SK-N-SH (cell line): ENCODE measurements at regions of chr16 and their contacts with region 1.

Region 1: DNA sequence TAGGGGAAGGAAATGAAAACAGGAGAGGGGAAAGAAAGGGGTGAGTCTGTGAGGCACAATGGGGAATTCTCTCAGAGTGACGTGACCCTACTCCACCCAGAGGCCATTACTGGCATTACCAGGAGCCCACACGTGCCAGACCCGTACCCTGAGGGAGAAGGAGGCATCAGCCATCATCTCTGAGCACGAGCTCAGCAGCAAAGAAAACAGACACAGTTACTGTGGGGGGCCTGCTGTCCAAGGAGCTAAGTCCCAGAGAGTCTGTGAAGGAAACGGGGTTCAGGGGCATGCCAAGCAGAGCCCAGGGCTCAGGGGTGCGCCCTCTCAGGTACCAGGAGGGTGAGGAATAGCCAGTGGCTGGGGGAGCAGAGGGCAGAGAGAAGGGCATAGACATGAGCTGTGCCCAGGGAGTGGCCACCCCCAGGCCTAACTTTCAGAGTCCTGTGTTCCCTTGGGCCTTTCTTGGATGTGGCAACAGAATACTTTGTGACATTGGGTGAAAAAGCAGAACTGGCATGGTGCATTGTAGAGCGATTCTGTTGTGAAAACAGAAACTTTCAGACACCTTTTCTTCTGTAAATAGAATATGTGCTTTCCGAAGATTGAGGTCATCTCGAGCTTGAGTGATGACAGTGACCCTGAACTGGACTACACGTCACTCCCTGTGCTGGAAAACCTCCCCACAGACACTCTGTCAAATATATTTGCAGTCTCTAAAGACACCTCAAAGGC is 11.3 kb downstream of the TAF1C start:
- DNase-seq: peak; percentile 91
- H3K4me3 ChIP-seq: no peak overlapping the region
- H3K27ac ChIP-seq: no peak overlapping the region
- H3K4me1 ChIP-seq: peaks cover 0 to 7% of the 10 kb centered on the region in 2 experiments; a peak in 1 of 4 replicates
- H3K27me3 ChIP-seq: no peaks in the 10 kb centered on the region
- CTCF ChIP-seq: peak; percentile 78
- EP300 ChIP-seq: no peak
- RAD21 ChIP-seq: peak; percentile 91

Region 2: GRCh38 chr16:83939266-83939855 is 236.2 kb before region 1 on chr16:
- CTCF ChIA-PET with region 1: no interaction called
- POLR2A ChIA-PET with region 1: no interaction called
- DNase-seq: no peak
- H3K4me3 ChIP-seq: no peak overlapping the region
- H3K27ac ChIP-seq: no peak overlapping the region
- H3K4me1 ChIP-seq: peaks cover 0 to 2% of the 10 kb centered on the region in 2 experiments; a peak in 1 of 4 replicates
- H3K27me3 ChIP-seq: no peaks in the 10 kb centered on the region
- CTCF ChIP-seq: no peak
- EP300 ChIP-seq: no peak
- RAD21 ChIP-seq: no peak

Region 3: DNA sequence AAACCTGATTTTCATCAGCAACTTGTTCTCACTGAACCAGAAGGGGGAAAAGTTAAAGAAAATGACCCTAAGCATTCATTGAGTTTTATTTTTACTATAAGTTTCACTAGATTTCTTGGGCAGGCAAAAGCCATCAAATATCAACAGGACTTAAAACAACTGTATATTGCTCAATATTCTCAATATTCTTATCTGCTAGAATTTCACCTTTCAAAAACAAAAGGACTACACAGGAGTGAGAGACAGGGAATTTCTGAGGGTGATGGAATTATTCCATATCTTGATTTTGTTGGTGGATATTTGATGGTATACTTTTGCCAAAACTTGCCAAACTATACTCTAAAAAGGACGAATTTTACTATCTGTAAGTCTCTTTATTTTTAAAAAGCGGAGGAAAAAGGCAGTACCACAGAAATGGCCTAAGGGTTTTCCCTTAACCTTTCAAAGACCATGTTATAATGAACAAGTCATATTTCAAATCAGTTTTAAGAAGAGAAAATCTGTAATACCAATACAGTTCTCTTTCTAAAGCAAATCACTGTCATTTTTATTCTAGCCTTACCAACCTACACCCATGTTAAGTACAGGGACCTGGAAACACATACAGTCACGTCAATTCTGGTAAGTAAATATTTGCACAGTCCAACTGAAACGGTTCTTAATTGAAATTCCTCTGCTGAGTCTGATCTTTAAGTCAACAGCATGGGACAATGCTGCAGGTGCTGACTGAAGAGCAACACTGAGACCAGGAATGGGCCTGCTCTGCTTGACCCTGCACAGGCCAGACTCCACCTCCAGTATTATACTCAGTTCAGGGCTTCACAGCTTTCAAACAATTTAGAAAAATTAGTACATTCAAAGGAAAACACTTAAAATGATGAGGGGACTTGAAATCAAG is 79.2 kb before region 1 on chr16:
- CTCF ChIA-PET with region 1: interaction called, 10 read pairs
- POLR2A ChIA-PET with region 1: no interaction called
- DNase-seq: no peak
- H3K4me3 ChIP-seq: no peak overlapping the region
- H3K27ac ChIP-seq: no peak overlapping the region
- H3K4me1 ChIP-seq: peaks cover 0 to 7% of the 10 kb centered on the region in 2 experiments; a peak in 1 of 4 replicates
- H3K27me3 ChIP-seq: no peaks in the 10 kb centered on the region
- CTCF ChIP-seq: no peak
- EP300 ChIP-seq: no peak
- RAD21 ChIP-seq: no peak

Region 4: GRCh38 chr16:84116720-84117493 is 58.6 kb before region 1 on chr16 and contains the start of gene MBTPS1:
- CTCF ChIA-PET with region 1: interaction called, 18 read pairs
- POLR2A ChIA-PET with region 1: no interaction called
- DNase-seq: peak; percentile 99
- H3K4me3 ChIP-seq: peak within 1 kb of the TSS; percentile 88 to 93
- H3K27ac ChIP-seq: peak within 1 kb of the TSS; percentile 59 to 73; a peak in 3 of 4 replicates
- H3K4me1 ChIP-seq: peaks cover 7 to 11% of the 10 kb centered on the region in 2 experiments; a peak in 3 of 4 replicates
- H3K27me3 ChIP-seq: no peaks in the 10 kb centered on the region
- CTCF ChIP-seq: no peak; the same call in 1 of the 2 replicates
- EP300 ChIP-seq: no peak; a peak in 1 of 4 replicates
- RAD21 ChIP-seq: no peak
- polyA plus RNA-seq, gene MBTPS1: 81.6 and 84.9 TPM in 2 replicates

Region 5: GRCh38 chr16:84124257-84125073 is 51.1 kb before region 1 on chr16:
- CTCF ChIA-PET with region 1: interaction called, 12 read pairs
- POLR2A ChIA-PET with region 1: no interaction called
- DNase-seq: no peak
- H3K4me3 ChIP-seq: no peak overlapping the region
- H3K27ac ChIP-seq: no peak overlapping the region
- H3K4me1 ChIP-seq: no peaks in the 10 kb centered on the region
- H3K27me3 ChIP-seq: no peaks in the 10 kb centered on the region
- CTCF ChIP-seq: no peak
- EP300 ChIP-seq: no peak
- RAD21 ChIP-seq: no peak

Region 6: GRCh38 chr16:84138824-84139627 is 36.5 kb before region 1 on chr16:
- CTCF ChIA-PET with region 1: interaction called, 14 read pairs
- POLR2A ChIA-PET with region 1: no interaction called
- DNase-seq: no peak
- H3K4me3 ChIP-seq: no peak overlapping the region
- H3K27ac ChIP-seq: no peak overlapping the region
- H3K4me1 ChIP-seq: peaks cover 0 to 2% of the 10 kb centered on the region in 2 experiments; a peak in 1 of 4 replicates
- H3K27me3 ChIP-seq: no peaks in the 10 kb centered on the region
- CTCF ChIP-seq: no peak
- EP300 ChIP-seq: no peak
- RAD21 ChIP-seq: no peak

Region 7: GRCh38 chr16:84186685-84187437 is 11.3 kb after region 1 on chr16 and contains the start of gene TAF1C:
- CTCF ChIA-PET with region 1: interaction called, 62 read pairs
- POLR2A ChIA-PET with region 1: interaction called, 4 read pairs
- DNase-seq: peak; percentile 99
- H3K4me3 ChIP-seq: peak within 1 kb of the TSS; percentile 96 to 100
- H3K27ac ChIP-seq: peak within 1 kb of the TSS; percentile 51 to 64; a peak in 3 of 4 replicates
- H3K4me1 ChIP-seq: peaks cover 0 to 11% of the 10 kb centered on the region in 2 experiments; a peak in 1 of 4 replicates
- H3K27me3 ChIP-seq: no peaks in the 10 kb centered on the region
- CTCF ChIP-seq: peak; percentile 91
- EP300 ChIP-seq: no peak; a peak in 1 of 4 replicates
- RAD21 ChIP-seq: peak; percentile 67
- polyA plus RNA-seq, gene TAF1C: 49.3 and 56.1 TPM in 2 replicates